Gastrocnemius medialis (tissue), 4 donors: ENCODE measurements at regions of chr13 and their contacts with region 1.

Region 1: DNA sequence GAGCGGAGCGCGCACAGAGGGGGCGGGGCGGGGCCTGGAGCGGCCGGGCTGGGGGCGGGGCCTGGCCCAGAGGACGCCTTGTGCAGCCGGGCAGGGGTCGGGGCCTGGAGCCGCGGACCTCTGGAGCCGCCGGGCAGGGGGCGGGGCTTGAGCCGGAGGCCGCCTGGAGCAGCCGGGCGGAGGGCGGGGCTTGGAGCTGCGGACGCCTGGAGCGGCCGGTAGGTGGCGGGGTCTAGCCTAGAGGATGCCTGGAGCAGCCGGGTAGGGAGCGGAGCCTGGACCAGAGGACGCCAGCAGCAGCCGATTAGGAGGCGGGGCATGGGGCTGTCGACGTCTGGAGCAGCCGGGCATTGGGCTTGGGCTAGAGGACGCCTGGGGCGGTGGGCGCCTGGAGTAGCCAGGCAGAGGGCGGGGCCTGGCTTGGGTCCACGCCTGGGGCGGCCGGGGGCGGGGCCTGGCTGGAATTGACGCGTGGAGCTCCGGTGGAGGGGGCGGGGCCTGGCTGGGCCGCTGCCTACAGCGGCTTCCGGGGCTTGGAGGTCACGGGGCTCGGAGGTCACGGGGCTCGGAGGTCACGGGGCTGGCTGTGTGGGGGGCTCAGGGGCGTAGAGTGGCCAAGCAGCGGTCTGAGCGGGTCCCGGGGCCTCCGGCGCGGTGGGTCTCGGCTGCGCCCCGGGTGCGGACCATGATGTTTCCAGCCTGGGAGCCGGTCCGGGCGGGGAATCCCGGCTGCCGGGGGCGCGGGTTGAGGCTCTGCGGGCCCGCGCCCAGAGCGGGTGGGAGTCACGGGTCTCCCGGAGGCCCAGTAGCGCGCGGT is at the start of gene ANKRD10:
- DNase-seq: peak; percentile 97 to 99
- ATAC-seq: peak; percentile 60 to 65
- H3K4me3 ChIP-seq: peak within 1 kb of the TSS; percentile 85 to 97 (median 96)
- H3K27ac ChIP-seq: peak within 1 kb of the TSS; percentile 96 to 100 (median 98)
- H3K4me1 ChIP-seq: peaks cover 37 to 47% of the 10 kb centered on the region in 2 donors
- H3K27me3 ChIP-seq: no peaks in the 10 kb centered on the region
- CTCF ChIP-seq: peak; percentile 77 to 99 (median 93)
- POLR2A ChIP-seq: peak; percentile 90 to 95
- total RNA-seq, gene ANKRD10: 145 to 381 (median 164) TPM

Region 2: GRCh38 chr13:110705826-110706569 is 209.3 kb before region 1 on chr13 and contains the start of gene CARS2:
- in situ Hi-C with region 1: loop called in 3 of 4 experiments (anchors 10 to 25 kb)
- intact Hi-C with region 1: no loop called
- DNase-seq: peak; percentile 91 to 95
- ATAC-seq: peak; percentile 86 to 91
- H3K4me3 ChIP-seq: peak within 1 kb of the TSS; percentile 59 to 77 (median 70)
- H3K27ac ChIP-seq: peak within 1 kb of the TSS; percentile 79 to 89 (median 84)
- H3K4me1 ChIP-seq: peaks cover 50 to 53% of the 10 kb centered on the region in 2 donors
- H3K27me3 ChIP-seq: no peaks in the 10 kb centered on the region
- CTCF ChIP-seq: peak in 4 of 5 experiments; percentile 25 to 32 (median 28)
- POLR2A ChIP-seq: peak; percentile 86 to 89
- total RNA-seq, gene CARS2: 22.5 to 34.8 (median 28.0) TPM

Region 3: DNA sequence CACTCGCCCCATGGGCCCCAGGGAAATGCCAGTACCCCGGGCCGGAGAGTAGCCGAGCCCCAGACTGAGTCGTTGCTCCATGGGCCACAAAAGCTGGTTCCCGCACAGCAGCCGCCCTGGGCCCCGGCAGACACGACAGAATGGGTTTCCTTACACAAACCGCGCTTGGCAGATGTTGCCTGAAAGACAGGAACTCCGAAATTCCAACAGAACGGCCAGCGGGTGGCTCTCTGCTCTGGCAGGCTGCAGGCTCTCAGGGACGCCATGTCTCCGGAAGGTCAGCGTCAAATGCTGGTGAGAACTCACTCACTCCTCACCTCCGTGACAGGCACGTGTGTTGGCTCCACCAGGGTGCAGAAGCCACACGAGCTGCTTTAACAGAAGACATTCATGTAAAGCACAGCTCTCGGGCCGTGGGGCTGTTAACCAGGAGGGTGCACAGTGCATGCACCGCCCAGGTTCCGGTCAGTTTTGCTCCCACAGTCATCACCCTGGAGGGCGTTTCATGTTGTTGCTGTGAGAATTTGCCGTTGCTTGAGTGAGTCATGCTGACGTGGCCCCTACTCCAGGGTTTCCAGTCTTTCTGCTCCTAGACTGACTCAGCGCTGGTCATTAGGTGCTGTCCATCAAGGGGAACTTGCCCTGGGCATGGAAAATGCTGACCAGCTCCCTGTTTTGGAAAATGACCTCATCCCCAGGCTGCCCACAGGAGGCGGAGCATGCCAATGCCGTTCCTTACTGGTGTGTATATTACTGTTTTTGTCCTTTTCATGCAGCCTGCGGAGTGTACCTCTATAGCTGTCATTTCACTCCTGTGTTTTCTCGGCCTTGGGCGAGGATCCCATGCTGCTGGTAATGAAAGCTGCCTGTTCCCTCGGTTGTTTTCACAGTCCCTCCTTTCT is 45.2 kb before region 1 on chr13:
- in situ Hi-C with region 1: no loop called
- intact Hi-C with region 1: loop called (anchors 1 kb)
- DNase-seq: peak; percentile 96 to 98
- ATAC-seq: peak; percentile 87 to 88
- H3K4me3 ChIP-seq: peak overlapping the region; percentile 70 to 82 (median 77)
- H3K27ac ChIP-seq: peak overlapping the region; percentile 98 to 99 (median 99)
- H3K4me1 ChIP-seq: peaks cover 42% of the 10 kb centered on the region in 2 donors
- H3K27me3 ChIP-seq: no peaks in the 10 kb centered on the region
- CTCF ChIP-seq: peak; percentile 13 to 53 (median 26)
- POLR2A ChIP-seq: peak; percentile 49 to 80

Region 4: DNA sequence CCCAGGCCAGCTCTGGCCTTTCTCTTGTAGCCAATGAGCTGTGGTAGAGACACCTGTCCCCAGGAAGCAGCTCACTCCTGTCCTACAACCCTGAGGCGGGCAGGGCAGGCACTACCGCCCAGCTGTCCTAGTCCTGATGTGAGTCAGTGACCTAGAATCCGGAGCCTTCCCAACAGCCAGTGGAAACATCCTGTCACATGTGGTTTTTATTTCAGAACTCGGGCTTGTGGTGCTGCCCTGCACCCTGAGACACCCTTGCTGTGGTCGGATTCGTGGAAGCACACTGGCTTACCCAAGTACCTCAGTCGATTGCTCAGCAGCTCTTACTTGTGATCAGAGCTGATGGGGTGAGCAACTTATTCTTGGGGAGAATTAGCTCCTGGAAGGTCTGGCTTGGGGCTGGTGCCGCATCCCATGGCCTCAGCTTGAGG is 116.3 kb after region 1 on chr13:
- in situ Hi-C with region 1: no loop called
- intact Hi-C with region 1: loop called (anchors 1 kb)
- DNase-seq: peak; percentile 80 to 83
- ATAC-seq: peak; percentile 92 to 96
- H3K4me3 ChIP-seq: no peak overlapping the region
- H3K27ac ChIP-seq: peak overlapping the region; percentile 74 to 95 (median 82)
- H3K4me1 ChIP-seq: peaks cover 13 to 21% of the 10 kb centered on the region in 2 donors
- H3K27me3 ChIP-seq: no peaks in the 10 kb centered on the region
- CTCF ChIP-seq: no peak
- POLR2A ChIP-seq: peak; percentile 67 to 79

Region 5: GRCh38 chr13:111153279-111153976 is 238.2 kb after region 1 on chr13:
- in situ Hi-C with region 1: no loop called
- intact Hi-C with region 1: loop called (anchors 5 kb)
- DNase-seq: peak; percentile 84 to 92
- ATAC-seq: peak; percentile 94 to 95
- H3K4me3 ChIP-seq: peak overlapping the region; percentile 72 to 96 (median 90)
- H3K27ac ChIP-seq: peak overlapping the region; percentile 93 to 98 (median 96)
- H3K4me1 ChIP-seq: peaks cover 35 to 48% of the 10 kb centered on the region in 2 donors
- H3K27me3 ChIP-seq: no peaks in the 10 kb centered on the region
- CTCF ChIP-seq: peak in 2 of 5 experiments; percentile 26 to 49
- POLR2A ChIP-seq: peak; percentile 96 to 97

Region 6: GRCh38 chr13:111216166-111216960 is 301.1 kb after region 1 on chr13:
- in situ Hi-C with region 1: loop called in 1 of 4 experiments (anchors 25 kb)
- intact Hi-C with region 1: loop called (anchors 10 kb)
- DNase-seq: peak; percentile 26 to 73
- ATAC-seq: peak; percentile 53 to 68
- H3K4me3 ChIP-seq: no peak overlapping the region
- H3K27ac ChIP-seq: peak overlapping the region; percentile 81 to 83 (median 82)
- H3K4me1 ChIP-seq: peaks cover 79 to 82% of the 10 kb centered on the region in 2 donors
- H3K27me3 ChIP-seq: no peaks in the 10 kb centered on the region
- CTCF ChIP-seq: peak; percentile 26 to 71 (median 56)
- POLR2A ChIP-seq: no peak

Region 7: DNA sequence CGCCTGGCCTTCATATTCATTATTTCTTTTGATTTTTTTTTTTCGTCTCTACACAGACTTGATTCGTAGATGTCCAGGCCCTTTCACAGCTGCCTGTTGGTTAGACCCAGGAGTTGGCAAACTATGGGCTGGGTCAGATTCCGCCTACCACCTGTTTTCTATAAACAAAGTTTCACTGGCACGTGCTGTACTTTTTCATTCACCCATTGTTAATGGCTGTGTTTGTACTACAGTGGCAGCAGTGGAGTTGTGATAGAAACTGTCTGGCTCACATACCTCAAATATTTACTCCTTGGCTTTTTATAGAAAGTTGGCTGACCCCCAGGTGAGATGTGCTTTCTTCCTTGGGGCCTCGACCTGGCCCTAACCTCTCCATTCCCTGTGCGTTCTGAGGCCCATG is 332.3 kb after region 1 on chr13:
- in situ Hi-C with region 1: loop called in 2 of 4 experiments (anchors 25 kb)
- intact Hi-C with region 1: loop called (anchors 10 kb)
- DNase-seq: peak; percentile 81 to 86
- ATAC-seq: peak; percentile 96 to 98
- H3K4me3 ChIP-seq: no peak overlapping the region
- H3K27ac ChIP-seq: peak overlapping the region; percentile 85 to 89 (median 86)
- H3K4me1 ChIP-seq: peaks cover 40 to 51% of the 10 kb centered on the region in 2 donors
- H3K27me3 ChIP-seq: no peaks in the 10 kb centered on the region
- CTCF ChIP-seq: no peak
- POLR2A ChIP-seq: no peak

Region 8: DNA sequence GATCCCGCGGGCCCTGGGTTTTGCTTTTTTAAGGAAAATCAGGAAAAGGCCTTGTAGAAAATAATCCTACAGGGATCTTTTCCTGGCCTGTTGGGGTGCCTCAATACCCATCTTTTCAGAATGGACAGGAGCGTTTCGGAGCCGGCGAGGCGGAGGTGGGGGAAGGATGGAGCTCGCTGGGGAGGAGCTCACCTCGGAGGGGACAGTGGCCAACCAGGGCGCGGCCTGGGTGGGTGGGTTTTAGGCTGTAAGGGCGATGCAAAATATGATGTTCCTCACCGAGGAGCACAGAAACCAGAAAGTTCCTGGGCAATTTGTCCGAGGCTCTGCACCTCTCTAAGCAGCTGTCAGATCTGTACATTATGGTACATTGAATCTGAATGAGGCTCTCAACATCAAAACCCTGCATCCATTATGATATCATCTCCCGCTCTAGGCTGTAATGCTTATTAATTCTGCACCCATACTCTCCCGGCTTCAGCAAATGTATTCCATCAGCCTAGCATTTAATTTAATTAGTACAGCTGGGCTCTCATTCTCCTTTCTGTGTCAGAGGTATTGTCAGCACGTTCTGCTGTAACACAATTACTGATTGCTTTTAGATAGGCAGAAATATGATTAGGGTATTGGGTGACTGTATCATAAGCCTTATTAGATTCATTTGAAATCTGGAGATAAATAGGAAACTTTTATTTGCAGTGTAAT is 1061.4 kb after region 1 on chr13:
- in situ Hi-C with region 1: no loop called
- intact Hi-C with region 1: no loop called
- DNase-seq: no peak
- ATAC-seq: no peak
- H3K4me3 ChIP-seq: no peak overlapping the region
- H3K27ac ChIP-seq: no peak overlapping the region
- H3K4me1 ChIP-seq: peaks cover 0 to 4% of the 10 kb centered on the region in 2 donors
- H3K27me3 ChIP-seq: peaks cover 7 to 31% (median 28%) of the 10 kb centered on the region in 3 donors
- CTCF ChIP-seq: no peak
- POLR2A ChIP-seq: no peak